ENCODE measurements at regions of chr13 and their contacts with region 1.

Region 1: GRCh38 chr13:41456768-41457588 is at the start of gene RGCC:
- DNase-seq: peak; percentile 89
- H3K4me3 Mint-ChIP-seq: peak within 1 kb of the TSS; percentile 85
- H3K27ac Mint-ChIP-seq: peak within 1 kb of the TSS; percentile 87
- H3K4me1 Mint-ChIP-seq: peaks cover 40% of the 10 kb centered on the region
- H3K27me3 Mint-ChIP-seq: peaks cover 35% of the 10 kb centered on the region

Region 2: DNA sequence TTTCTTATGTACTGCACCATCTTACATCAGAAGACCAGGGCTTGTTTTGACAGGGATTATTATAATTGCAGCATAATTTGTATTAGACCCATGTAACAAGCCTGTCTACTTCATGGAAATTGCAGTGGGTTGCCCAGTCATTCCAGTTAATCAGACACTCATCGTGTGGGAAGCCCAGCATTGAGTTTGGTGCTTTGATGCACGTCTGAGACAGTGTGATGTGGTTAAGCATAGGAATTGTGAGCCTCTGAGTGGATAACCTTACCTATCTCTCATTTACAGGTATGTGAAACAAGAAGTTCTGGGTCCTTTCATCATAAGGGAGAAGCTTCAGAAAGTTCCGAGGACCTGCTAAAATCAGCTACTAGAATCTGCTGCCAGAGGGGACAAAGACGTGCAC is 13.2 kb after region 1 on chr13:
- CTCF ChIA-PET with region 1: interaction called, 18 read pairs
- DNase-seq: no peak
- H3K4me3 Mint-ChIP-seq: no peak overlapping the region
- H3K27ac Mint-ChIP-seq: peak overlapping the region; percentile 7
- H3K4me1 Mint-ChIP-seq: peaks cover 58% of the 10 kb centered on the region
- H3K27me3 Mint-ChIP-seq: no peaks in the 10 kb centered on the region

Region 3: DNA sequence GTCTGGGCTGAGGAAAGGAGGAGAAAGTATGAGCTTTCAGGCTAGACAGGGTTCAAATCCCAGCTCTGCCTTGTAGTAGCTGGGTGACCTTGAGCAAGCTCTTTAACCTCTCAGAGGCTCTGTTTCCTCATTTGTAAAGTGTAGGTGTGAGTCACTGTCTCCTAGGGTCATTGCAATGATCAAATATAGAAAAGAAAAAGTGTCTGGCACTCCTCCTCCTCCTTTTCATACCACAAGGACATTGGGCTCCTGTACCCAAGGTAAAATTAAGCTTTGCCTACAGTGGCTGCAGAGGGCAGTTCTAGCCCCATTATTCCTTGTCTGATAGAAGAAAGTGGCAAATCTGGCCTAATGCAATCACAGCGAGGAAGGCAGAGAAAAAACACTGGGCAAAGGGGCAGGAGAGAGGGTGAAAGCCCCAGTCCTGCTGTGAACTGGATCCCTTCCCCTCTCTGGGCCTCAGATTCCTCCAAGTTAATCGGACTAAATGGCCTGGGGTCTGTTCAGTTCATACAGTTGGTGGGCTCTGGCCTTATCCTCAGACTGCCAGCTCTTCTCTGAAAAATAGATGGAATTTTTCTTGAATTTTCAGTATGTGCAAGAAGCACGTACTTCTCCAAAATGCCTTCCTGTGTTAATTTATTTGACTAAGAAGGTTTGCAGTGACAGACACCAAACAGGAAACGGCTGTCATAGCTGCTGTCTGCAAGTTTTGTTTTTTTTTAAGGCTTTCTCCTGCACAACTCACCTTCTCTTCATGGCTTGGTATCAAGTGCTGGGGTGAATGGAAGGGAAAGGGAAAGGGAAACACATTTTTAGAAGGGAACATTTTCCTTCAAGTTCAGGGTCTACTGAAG is 35.7 kb after region 1 on chr13:
- CTCF ChIA-PET with region 1: interaction called, 42 read pairs
- DNase-seq: no peak
- H3K4me3 Mint-ChIP-seq: peak overlapping the region; percentile 40
- H3K27ac Mint-ChIP-seq: peak overlapping the region; percentile 97
- H3K4me1 Mint-ChIP-seq: peaks cover 82% of the 10 kb centered on the region
- H3K27me3 Mint-ChIP-seq: no peaks in the 10 kb centered on the region

Region 4: GRCh38 chr13:41502673-41503072 is 45.7 kb after region 1 on chr13:
- CTCF ChIA-PET with region 1: interaction called, 40 read pairs
- DNase-seq: peak; percentile 46
- H3K4me3 Mint-ChIP-seq: no peak overlapping the region
- H3K27ac Mint-ChIP-seq: no peak overlapping the region
- H3K4me1 Mint-ChIP-seq: peaks cover 48% of the 10 kb centered on the region
- H3K27me3 Mint-ChIP-seq: no peaks in the 10 kb centered on the region

Region 5: GRCh38 chr13:41587492-41587891 is 130.5 kb after region 1 on chr13:
- CTCF ChIA-PET with region 1: interaction called, 11 read pairs
- DNase-seq: no peak
- H3K4me3 Mint-ChIP-seq: no peak overlapping the region
- H3K27ac Mint-ChIP-seq: no peak overlapping the region
- H3K4me1 Mint-ChIP-seq: no peaks in the 10 kb centered on the region
- H3K27me3 Mint-ChIP-seq: no peaks in the 10 kb centered on the region

Region 6: GRCh38 chr13:41652727-41653361 is 195.9 kb after region 1 on chr13:
- CTCF ChIA-PET with region 1: interaction called, 28 read pairs
- DNase-seq: peak; percentile 63
- H3K4me3 Mint-ChIP-seq: no peak overlapping the region
- H3K27ac Mint-ChIP-seq: no peak overlapping the region
- H3K4me1 Mint-ChIP-seq: peaks cover 2% of the 10 kb centered on the region
- H3K27me3 Mint-ChIP-seq: no peaks in the 10 kb centered on the region

Region 7: DNA sequence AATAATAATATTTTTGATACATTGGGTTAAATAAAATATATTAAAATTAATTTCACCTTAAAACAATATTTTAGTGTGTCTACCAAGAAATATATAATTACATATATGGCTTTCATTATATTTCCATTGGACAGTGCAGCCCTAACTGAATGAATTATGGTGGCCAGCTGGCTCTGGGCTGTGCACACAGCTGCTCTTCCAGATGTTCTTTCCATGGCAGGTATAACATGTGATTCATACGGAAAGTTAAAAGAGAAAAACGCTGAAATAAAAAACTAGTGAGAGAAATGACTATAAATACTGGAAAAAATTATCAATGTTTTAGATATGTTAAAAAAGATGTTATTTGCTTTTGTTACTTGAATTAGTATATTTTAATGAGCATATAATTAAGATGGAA is 216.7 kb after region 1 on chr13:
- CTCF ChIA-PET with region 1: no interaction called
- DNase-seq: no peak
- H3K4me3 Mint-ChIP-seq: no peak overlapping the region
- H3K27ac Mint-ChIP-seq: no peak overlapping the region
- H3K4me1 Mint-ChIP-seq: no peaks in the 10 kb centered on the region
- H3K27me3 Mint-ChIP-seq: no peaks in the 10 kb centered on the region

Region 8: GRCh38 chr13:41763782-41764181 is 306.8 kb after region 1 on chr13:
- CTCF ChIA-PET with region 1: no interaction called
- DNase-seq: no peak
- H3K4me3 Mint-ChIP-seq: no peak overlapping the region
- H3K27ac Mint-ChIP-seq: no peak overlapping the region
- H3K4me1 Mint-ChIP-seq: peaks cover 16% of the 10 kb centered on the region
- H3K27me3 Mint-ChIP-seq: no peaks in the 10 kb centered on the region

Measured in activated naive CD4-positive, alpha-beta T cell treated with anti-CD3 and anti-CD28 coated beads, Interleukin-2, amount 10 ng/mL, durations not matched to agents 7 days and 5 days (primary cell).